Endothelial cell of umbilical vein (primary cell): ENCODE measurements at regions of chr3 and their contacts with region 1.

Region 1: GRCh38 chr3:191350396-191351090 is 20.2 kb upstream of the UTS2B start:
- DNase-seq: peak; percentile 75
- H3K4me3 ChIP-seq: peak overlapping the region in 1 of 3 experiments; percentile 39
- H3K27ac ChIP-seq: peak overlapping the region; percentile 73
- H3K4me1 ChIP-seq: peaks cover 71% of the 10 kb centered on the region
- H3K27me3 ChIP-seq: no peaks in the 10 kb centered on the region
- CTCF ChIP-seq: no peak
- POLR2A ChIP-seq: no peak

Region 2: GRCh38 chr3:191336833-191337232 is 13.7 kb before region 1 on chr3:
- CTCF ChIA-PET with region 1: interaction called, 11 read pairs
- POLR2A ChIA-PET with region 1: no interaction called
- dilution Hi-C with region 1: no loop called
- intact Hi-C with region 1: loop called (anchors 1 kb)
- DNase-seq: no peak
- H3K4me3 ChIP-seq: no peak overlapping the region
- H3K27ac ChIP-seq: no peak overlapping the region
- H3K4me1 ChIP-seq: peaks cover 75% of the 10 kb centered on the region
- H3K27me3 ChIP-seq: no peaks in the 10 kb centered on the region
- CTCF ChIP-seq: no peak
- POLR2A ChIP-seq: no peak

Region 3: DNA sequence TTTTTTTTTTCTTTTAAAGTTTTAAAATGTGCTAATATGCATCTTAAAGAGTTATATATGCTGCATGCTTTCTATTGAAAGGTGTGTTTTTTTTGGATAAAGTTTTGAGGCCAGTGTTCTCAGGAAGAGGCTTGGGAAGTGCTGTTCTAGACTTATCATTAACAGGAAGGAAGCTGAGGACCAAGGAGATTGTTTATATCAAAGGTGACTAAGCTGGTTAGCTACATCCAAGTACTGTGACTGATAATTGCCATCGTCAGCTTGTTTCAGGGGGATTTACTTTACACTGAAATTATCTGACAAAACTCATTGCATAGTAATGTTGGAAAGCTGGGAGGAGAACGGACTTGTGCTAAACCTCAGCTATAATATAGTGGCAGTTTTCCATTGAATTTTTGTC is 16.1 kb after region 1 on chr3:
- CTCF ChIA-PET with region 1: interaction called, 6 read pairs
- POLR2A ChIA-PET with region 1: no interaction called
- dilution Hi-C with region 1: no loop called
- intact Hi-C with region 1: loop called (anchors 1 kb)
- DNase-seq: peak; percentile 78
- H3K4me3 ChIP-seq: peak overlapping the region in 1 of 3 experiments; percentile 50
- H3K27ac ChIP-seq: peak overlapping the region; percentile 61
- H3K4me1 ChIP-seq: peaks cover 38% of the 10 kb centered on the region
- H3K27me3 ChIP-seq: no peaks in the 10 kb centered on the region
- CTCF ChIP-seq: no peak
- POLR2A ChIP-seq: peak; percentile 61

Region 4: DNA sequence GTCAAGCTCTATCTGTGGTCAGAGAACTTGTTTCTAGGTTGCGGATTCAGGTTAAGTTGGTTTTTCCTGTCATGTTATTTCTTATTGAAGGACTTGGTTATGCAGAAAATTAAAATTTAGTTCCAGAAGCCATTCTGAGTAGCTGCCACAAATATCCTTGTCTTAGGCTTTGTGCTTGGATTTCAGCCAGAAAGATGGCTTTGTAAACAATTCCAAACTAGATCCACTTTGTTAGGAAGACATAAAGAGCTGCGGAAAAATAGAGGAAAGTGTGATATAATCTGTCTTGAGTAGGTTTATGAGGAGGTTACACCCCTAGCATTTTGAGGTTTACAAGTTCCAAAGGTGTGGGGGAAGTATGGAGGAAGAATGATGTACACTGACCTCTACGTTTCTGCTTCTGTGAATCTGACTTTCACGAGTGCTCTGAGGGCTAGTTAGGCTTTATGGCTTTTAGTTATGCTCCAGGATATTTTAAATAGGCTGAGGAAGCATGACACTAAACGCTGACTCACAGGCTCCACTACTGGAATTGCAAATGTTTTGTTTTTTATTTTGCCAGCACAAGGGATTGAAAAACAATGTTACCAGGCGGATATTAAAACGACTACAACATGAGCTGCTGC is 26.1 kb after region 1 on chr3:
- CTCF ChIA-PET with region 1: no interaction called
- POLR2A ChIA-PET with region 1: no interaction called
- dilution Hi-C with region 1: no loop called
- intact Hi-C with region 1: loop called (anchors 1 kb)
- DNase-seq: peak; percentile 92
- H3K4me3 ChIP-seq: no peak overlapping the region
- H3K27ac ChIP-seq: peak overlapping the region; percentile 73
- H3K4me1 ChIP-seq: peaks cover 39% of the 10 kb centered on the region
- H3K27me3 ChIP-seq: no peaks in the 10 kb centered on the region
- CTCF ChIP-seq: no peak
- POLR2A ChIP-seq: no peak